G401 (cell line): ENCODE measurements at regions of chr16 and their contacts with region 1.

Region 1: DNA sequence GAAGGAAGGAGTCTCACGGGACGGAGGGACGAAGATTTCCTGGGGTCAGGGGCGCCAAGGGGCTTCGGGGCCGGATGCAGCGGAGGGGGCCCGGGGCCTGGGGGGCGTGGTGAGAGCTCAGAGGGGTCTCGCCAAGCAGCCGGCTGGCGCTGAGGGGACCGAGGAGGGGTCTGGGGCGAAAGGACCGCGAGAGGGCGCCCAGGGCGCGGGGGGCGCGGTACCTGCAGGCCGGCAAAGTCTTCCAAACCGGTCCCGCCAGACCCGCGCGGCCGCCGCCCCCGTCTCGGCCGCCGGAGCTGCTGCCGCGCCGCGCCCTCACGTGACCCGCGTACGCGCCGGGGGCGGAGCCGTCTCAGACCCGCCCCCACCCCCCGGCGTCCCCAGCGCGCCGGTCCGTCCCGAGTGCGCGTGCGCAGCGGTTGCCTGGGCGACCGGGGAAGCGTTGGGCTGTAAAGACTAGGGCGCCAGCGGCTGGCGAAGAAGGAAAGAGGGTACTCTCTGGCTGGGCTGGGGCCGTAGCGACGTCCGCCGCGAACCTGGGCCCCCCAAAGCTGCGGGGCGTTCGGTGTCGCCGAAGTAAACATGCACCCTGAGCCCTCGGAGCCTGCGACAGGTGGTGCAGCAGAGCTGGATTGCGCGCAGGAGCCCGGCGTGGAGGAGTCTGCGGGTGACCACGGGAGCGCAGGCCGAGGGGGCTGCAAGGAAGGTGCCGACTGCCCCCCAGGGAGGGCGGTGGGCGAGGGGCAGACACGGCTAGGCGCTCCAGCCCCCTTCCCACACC is at the starts of genes DNAAF1 and HSDL1:
- DNase-seq: peak; percentile 88
- total RNA-seq, gene DNAAF1: not detected in 2 replicates
- total RNA-seq, gene HSDL1: 37.9 and 44.8 TPM in 2 replicates

Region 2: DNA sequence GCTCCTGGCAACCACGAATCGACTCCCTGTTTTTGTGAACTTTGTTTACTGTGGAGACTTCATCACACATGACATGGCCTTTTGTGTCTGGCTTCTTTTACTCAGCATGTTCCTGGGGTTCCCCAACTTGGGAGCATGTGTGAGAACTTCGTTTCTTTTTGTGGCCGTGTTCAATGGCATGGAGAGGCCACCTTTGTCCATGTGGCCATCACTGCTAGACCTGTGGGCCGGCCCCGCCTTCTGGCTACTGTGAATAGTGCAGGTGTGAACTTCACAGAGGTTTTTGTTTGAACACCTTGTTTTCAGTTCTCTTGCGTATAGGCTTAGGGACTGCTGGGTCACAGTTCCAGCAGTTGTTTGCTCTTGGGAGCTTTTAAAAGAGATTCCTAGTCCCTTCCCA is 96.8 kb before region 1 on chr16:
- in situ Hi-C with region 1: no loop called
- DNase-seq: no peak

Region 3: DNA sequence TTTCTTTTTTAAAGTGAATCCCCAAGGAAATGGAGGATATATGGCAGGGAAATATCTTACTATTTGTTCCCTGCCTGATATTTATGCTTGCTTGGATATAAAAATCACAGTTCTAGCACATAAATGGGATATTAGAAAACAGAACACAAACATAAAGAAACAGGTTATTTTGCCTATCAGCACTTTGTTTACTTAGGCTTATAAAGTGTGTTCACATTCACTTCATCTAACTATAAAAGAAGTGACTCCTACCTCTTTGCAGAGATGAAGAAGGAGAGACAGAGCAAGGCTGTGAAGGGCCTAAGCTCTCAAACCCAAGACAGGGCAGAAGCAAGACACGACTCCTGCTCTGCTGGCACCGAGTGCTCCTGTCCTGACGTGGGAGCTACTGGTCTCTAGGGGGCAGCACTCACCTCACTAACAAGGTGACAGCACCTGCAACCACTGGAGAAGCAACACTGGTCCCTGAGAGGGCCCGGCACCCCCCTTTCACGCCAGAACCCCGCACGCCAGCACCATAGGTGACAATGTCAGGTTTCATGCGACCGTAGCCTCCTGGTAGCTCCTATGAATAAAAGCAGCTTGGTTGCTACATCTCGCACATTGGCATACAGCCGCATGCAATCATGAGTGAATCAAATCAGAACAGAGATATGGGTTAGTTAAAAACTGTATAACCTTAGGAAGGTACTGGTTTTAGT is 60.3 kb before region 1 on chr16:
- in situ Hi-C with region 1: loop called (anchors 10 kb)
- DNase-seq: peak; percentile 77